Activated B cell treated with CpG ODN at 0.5 μM for 24 hours (primary cell): ENCODE measurements at regions of chr11 and their contacts with region 1.

Region 1: DNA sequence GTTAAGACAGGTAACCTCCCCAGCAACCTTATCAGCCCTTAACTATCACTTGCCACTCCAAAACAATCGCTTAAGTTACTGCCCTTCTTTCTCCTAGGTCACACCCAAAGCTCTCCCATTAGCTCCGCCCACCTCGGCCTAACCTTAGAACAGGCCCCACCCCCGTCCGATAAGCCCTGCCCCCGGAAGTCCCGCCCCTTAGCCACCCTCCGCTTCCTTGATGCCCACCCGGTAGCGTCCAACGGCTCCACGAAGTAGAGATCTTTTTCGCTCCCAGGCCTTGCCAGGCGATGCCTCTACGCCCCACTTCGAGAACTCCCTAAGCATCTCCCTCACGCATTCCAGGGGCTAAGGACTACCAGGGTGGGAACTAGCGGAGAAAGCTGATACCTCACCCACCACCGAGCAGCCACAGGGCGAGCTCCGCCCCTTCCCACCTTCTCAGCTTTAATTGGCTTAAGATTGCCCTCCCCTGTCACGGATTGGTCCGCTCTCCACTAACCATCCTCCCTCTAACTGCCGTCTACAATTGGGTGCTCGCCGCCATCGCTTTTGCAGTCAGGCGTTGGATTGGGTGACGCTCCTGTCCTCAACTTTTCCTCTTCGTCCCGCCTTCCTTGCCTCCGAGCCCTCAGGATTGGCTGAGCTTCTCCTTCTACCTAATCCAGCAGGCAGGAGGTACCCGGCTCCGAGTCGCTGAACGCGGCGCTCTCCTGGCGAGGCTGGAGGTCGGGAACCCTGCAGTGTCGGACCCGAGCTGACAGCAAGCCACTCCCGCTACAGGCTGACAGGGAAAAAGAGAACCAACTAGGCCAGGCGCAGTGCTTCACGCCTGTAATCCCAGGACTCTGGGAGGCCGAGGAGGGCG is at the start of gene ZBTB3:
- DNase-seq: peak; percentile 91
- ATAC-seq: peak; percentile 93
- H3K4me3 Mint-ChIP-seq: peak within 1 kb of the TSS; percentile 97
- H3K27ac Mint-ChIP-seq: peak within 1 kb of the TSS; percentile 99
- H3K4me1 Mint-ChIP-seq: peaks cover 22% of the 10 kb centered on the region
- H3K27me3 Mint-ChIP-seq: no peaks in the 10 kb centered on the region
- CTCF ChIP-seq: no peak
- total RNA-seq, gene ZBTB3: 17.6 and 19.9 TPM in 2 replicates

Region 2: GRCh38 chr11:62123669-62124185 is 630.2 kb before region 1 on chr11 and contains the start of gene INCENP:
- CTCF ChIA-PET with region 1: no interaction called
- POLR2A ChIA-PET with region 1: no interaction called
- intact Hi-C with region 1: loop called (anchors 5 kb)
- DNase-seq: peak; percentile 80
- ATAC-seq: peak; percentile 99
- H3K4me3 Mint-ChIP-seq: peak within 1 kb of the TSS; percentile 93
- H3K27ac Mint-ChIP-seq: peak within 1 kb of the TSS; percentile 84
- H3K4me1 Mint-ChIP-seq: peaks cover 23% of the 10 kb centered on the region
- H3K27me3 Mint-ChIP-seq: no peaks in the 10 kb centered on the region
- CTCF ChIP-seq: no peak
- total RNA-seq, gene INCENP: 29.0 and 34.8 TPM in 2 replicates

Region 3: DNA sequence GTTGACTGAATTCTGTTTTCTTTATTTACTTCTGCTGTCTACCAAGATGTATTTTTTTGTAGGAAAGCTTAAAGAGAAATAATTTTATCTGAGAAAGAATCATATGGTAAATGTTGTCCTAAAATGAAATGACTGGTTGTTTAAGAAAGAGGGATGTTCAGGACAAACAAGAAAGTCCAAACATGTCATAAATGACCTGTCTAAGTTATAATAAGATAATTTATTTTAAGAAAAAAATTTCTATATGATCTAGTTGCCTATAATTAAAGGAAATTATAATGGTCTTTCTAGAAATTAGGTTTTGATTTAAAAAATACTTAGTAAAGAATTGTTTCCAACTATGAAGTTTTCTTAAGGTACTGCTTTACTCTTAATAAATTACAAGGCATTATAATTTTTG is 473.5 kb before region 1 on chr11:
- CTCF ChIA-PET with region 1: no interaction called
- POLR2A ChIA-PET with region 1: no interaction called
- intact Hi-C with region 1: no loop called
- DNase-seq: no peak
- ATAC-seq: no peak
- H3K4me3 Mint-ChIP-seq: no peak overlapping the region
- H3K27ac Mint-ChIP-seq: no peak overlapping the region
- H3K4me1 Mint-ChIP-seq: no peaks in the 10 kb centered on the region
- H3K27me3 Mint-ChIP-seq: peaks cover 4% of the 10 kb centered on the region
- CTCF ChIP-seq: no peak

Region 4: GRCh38 chr11:62621567-62622470 is 132.2 kb before region 1 on chr11 and contains the start of gene B3GAT3:
- CTCF ChIA-PET with region 1: no interaction called
- POLR2A ChIA-PET with region 1: interaction called, 13 read pairs
- intact Hi-C with region 1: no loop called
- DNase-seq: peak; percentile 93
- ATAC-seq: peak; percentile 92
- H3K4me3 Mint-ChIP-seq: peak within 1 kb of the TSS; percentile 90
- H3K27ac Mint-ChIP-seq: peak within 1 kb of the TSS; percentile 93
- H3K4me1 Mint-ChIP-seq: peaks cover 19% of the 10 kb centered on the region
- H3K27me3 Mint-ChIP-seq: no peaks in the 10 kb centered on the region
- CTCF ChIP-seq: no peak
- total RNA-seq, gene B3GAT3: 48.8 and 56.6 TPM in 2 replicates

Region 5: GRCh38 chr11:62671575-62672389 is 82.2 kb before region 1 on chr11 and contains the starts of genes LBHD1 and UQCC3:
- CTCF ChIA-PET with region 1: no interaction called
- POLR2A ChIA-PET with region 1: interaction called, 55 read pairs
- intact Hi-C with region 1: no loop called
- DNase-seq: peak; percentile 61
- ATAC-seq: peak; percentile 82
- H3K4me3 Mint-ChIP-seq: peak within 1 kb of the TSS; percentile 100
- H3K27ac Mint-ChIP-seq: peak within 1 kb of the TSS; percentile 98
- H3K4me1 Mint-ChIP-seq: peaks cover 62% of the 10 kb centered on the region
- H3K27me3 Mint-ChIP-seq: no peaks in the 10 kb centered on the region
- CTCF ChIP-seq: no peak
- total RNA-seq, gene LBHD1: 19.1 and 24.9 TPM in 2 replicates
- total RNA-seq, gene UQCC3: 8.3 and 9.4 TPM in 2 replicates

Region 6: DNA sequence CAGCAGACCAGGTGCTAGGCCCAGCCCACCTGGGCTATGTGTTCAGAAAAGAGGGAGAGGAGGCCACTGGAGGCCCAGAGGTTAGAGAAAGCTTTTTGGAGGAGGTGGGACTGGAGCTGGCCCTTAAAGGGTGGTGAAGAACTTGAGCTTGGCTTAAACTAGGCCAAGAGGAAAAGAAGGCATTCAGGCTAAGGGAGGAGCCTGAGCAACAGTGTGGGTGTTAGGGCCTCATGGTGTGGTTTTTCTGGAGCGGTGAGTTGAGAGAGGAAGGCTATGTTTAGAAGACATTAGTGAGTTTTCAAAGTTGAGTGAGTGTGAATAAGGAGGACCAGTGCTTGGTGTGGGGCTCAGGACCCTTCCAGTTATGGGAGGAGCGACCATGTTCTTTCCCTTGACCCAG is 23.4 kb after region 1 on chr11:
- CTCF ChIA-PET with region 1: interaction called, 7 read pairs
- POLR2A ChIA-PET with region 1: interaction called, 109 read pairs
- intact Hi-C with region 1: no loop called
- DNase-seq: no peak
- ATAC-seq: no peak
- H3K4me3 Mint-ChIP-seq: no peak overlapping the region
- H3K27ac Mint-ChIP-seq: no peak overlapping the region
- H3K4me1 Mint-ChIP-seq: peaks cover 3% of the 10 kb centered on the region
- H3K27me3 Mint-ChIP-seq: no peaks in the 10 kb centered on the region
- CTCF ChIP-seq: no peak

Region 7: DNA sequence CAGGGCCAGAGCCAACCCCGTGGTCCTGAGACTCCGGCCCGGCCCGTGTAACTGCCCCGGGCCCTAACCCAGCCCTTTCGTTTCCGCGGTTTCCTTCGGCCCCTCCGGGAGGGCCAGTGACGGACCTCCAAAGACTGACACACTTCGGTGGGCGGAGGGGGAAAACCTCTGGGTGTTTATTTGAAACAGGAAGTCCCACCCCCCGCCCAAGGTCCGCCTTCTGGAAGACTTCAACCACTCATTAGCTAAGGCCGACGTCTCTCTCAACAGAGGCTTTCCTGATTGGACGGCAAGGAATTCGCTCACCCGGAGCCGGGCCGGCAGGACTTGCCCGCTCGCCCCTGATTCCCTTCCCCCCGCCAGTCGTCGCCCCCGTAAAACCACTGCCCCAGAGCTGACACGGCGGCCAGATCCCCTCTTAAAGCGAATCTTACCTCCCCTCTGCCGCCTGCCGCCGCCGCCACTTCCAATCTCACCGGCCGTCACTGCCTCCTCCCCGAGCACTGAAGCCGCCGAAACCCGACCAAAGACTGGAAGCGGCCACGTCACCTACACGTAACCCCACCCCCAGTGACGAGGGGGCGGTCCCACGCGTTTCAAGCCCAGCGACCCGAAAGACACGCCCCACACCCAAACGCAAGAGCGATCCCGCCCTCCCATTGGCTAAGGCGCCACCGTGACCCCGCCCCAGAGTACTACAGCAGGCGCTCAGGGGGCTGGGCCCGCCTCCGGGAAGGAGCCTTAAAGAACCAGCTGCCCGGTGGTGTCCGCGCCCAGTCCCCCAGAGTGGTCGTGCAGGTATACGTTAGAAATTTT is 77.8 kb after region 1 on chr11 and contains the start of gene STX5:
- CTCF ChIA-PET with region 1: no interaction called
- POLR2A ChIA-PET with region 1: interaction called, 20 read pairs
- intact Hi-C with region 1: no loop called
- DNase-seq: peak; percentile 98
- ATAC-seq: peak; percentile 91
- H3K4me3 Mint-ChIP-seq: peak within 1 kb of the TSS; percentile 100
- H3K27ac Mint-ChIP-seq: peak within 1 kb of the TSS; percentile 100
- H3K4me1 Mint-ChIP-seq: peaks cover 47% of the 10 kb centered on the region
- H3K27me3 Mint-ChIP-seq: no peaks in the 10 kb centered on the region
- CTCF ChIP-seq: no peak
- total RNA-seq, gene STX5: 58.4 and 71.5 TPM in 2 replicates

Region 8: DNA sequence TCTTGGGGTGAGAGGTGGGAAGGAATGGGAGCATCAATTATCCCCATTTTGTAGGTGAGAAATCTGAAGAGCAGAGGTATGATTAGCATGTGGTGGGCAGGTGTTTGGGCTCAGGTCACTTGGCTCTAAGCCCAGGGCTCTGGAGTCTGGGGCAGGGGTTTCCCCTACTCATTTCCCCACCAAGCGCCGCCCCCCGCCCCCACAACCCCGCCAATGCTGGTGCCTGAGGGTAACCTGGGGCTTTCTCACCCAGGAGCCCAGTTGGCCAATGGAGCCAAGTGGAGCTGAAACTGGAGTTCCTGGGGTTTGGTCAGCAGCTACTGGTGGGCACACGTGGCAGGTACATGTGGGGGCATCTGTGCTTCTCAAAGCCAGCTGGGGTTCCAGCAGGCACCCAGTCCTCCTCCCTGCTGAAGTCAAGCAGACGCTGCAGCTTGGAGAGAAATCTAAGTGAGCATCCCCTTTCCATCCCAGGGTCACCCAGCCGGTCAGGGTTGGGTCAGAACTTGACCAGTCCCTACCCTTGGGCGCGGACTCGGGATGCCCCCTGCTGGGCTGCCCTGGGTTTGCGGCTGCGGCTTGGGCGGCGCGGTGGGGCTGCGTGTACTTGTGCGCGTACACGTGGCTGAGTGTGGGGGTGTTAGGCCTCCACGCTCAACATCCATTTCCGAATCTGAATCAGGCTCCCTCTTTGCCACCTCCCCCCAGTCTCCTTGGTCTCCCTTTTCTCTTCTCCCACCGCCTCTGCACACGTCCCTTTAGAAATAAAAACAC is 168.9 kb after region 1 on chr11:
- CTCF ChIA-PET with region 1: no interaction called
- POLR2A ChIA-PET with region 1: no interaction called
- intact Hi-C with region 1: no loop called
- DNase-seq: no peak
- ATAC-seq: no peak
- H3K4me3 Mint-ChIP-seq: peak overlapping the region; percentile 13
- H3K27ac Mint-ChIP-seq: no peak overlapping the region
- H3K4me1 Mint-ChIP-seq: peaks cover 35% of the 10 kb centered on the region
- H3K27me3 Mint-ChIP-seq: peaks cover 46% of the 10 kb centered on the region
- CTCF ChIP-seq: no peak

Region 9: GRCh38 chr11:62958547-62959421 is 204.8 kb after region 1 on chr11:
- CTCF ChIA-PET with region 1: no interaction called
- POLR2A ChIA-PET with region 1: no interaction called
- intact Hi-C with region 1: no loop called
- DNase-seq: no peak
- ATAC-seq: no peak
- H3K4me3 Mint-ChIP-seq: no peak overlapping the region
- H3K27ac Mint-ChIP-seq: no peak overlapping the region
- H3K4me1 Mint-ChIP-seq: no peaks in the 10 kb centered on the region
- H3K27me3 Mint-ChIP-seq: peaks cover 38% of the 10 kb centered on the region
- CTCF ChIP-seq: no peak